Adrenal gland (tissue), 19 donors: ENCODE measurements at regions of chr11 and their contacts with region 1.

Region 1: GRCh38 chr11:118956094-118956846 is at the start of gene UPK2:
- DNase-seq: peak; percentile 87 to 96 (median 93)
- H3K4me3 ChIP-seq: no peak within 1 kb of the TSS
- H3K27ac ChIP-seq: no peak within 1 kb of the TSS
- H3K4me1 ChIP-seq: no peaks in the 10 kb centered on the region
- H3K27me3 ChIP-seq: no peaks in the 10 kb centered on the region
- CTCF ChIP-seq: peak; percentile 91 to 99 (median 97)
- POLR2A ChIP-seq: no peak
- total RNA-seq, gene UPK2: 0.39 TPM in 1 of 9 donors, not detected in the others

Region 2: GRCh38 chr11:118689851-118690552 is 266.3 kb before region 1 on chr11:
- intact Hi-C with region 1: loop called (anchors 5 kb)
- DNase-seq: peak; percentile 83 to 98 (median 94)
- H3K4me3 ChIP-seq: peak overlapping the region in 2 of 4 donors; percentile 42 to 57
- H3K27ac ChIP-seq: peak overlapping the region in 4 of 5 donors; percentile 49 to 86 (median 59)
- H3K4me1 ChIP-seq: peaks cover 10 to 12% of the 10 kb centered on the region in 2 donors
- H3K27me3 ChIP-seq: no peaks in the 10 kb centered on the region
- CTCF ChIP-seq: peak; percentile 63 to 96 (median 90)
- POLR2A ChIP-seq: no peak